ENCODE measurements at regions of chr13 and their contacts with region 1.

Region 1: GRCh38 chr13:110306960-110307746 is at the starts of genes COL4A1 and COL4A2:
- DNase-seq: peak; percentile 87
- H3K4me3 ChIP-seq: peak within 1 kb of the TSS; percentile 83
- H3K27ac ChIP-seq: peak within 1 kb of the TSS; percentile 97
- H3K4me1 ChIP-seq: peaks cover 98% of the 10 kb centered on the region
- H3K27me3 ChIP-seq: no peaks in the 10 kb centered on the region
- CTCF ChIP-seq: no peak
- total RNA-seq, gene COL4A1: 120 TPM
- total RNA-seq, gene COL4A2: 117 TPM

Region 2: DNA sequence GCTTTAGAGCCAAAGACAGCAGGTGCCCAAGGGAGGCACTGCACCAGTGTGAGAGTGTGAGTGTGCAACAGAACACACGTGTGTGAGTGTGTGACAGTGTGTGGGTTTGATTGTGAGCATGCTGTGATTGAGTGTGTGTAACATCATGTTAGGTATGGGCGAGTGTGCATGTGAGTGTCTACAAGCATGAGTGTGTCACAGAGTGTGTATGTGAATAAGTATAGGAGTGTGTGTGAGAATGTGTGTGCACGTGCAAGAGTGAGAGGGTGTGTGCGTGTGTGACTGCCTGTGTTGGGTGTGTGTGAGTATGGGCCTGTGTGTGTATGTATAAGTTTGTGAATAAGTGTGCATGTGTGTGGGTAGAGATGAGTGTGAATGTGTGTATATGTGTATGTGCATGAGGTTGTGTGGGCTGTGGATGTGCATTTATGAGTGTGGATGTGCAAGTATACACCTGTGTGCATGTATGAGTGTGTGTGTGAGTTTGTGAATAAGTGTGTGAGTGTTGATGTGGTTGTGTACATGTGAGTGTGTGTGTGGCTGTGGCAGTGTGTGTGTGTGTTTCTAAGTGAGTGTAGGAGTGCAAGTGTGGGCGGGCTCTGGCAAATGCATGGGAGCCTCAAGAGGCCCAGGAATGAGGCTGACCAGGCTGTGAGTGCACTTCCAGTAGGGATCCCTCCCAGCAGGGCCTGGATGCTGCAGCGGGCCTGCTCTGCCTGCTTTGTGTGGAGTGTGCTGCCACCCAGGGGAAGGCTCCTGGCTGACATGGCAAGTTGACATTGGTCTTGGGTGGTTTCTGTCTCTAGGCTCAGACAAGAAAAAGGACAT is 198.6 kb before region 1 on chr13:
- intact Hi-C with region 1: no loop called
- DNase-seq: peak; percentile 80
- H3K4me3 ChIP-seq: no peak overlapping the region
- H3K27ac ChIP-seq: peak overlapping the region; percentile 82
- H3K4me1 ChIP-seq: peaks cover 51% of the 10 kb centered on the region
- H3K27me3 ChIP-seq: no peaks in the 10 kb centered on the region
- CTCF ChIP-seq: peak; percentile 80

Region 3: DNA sequence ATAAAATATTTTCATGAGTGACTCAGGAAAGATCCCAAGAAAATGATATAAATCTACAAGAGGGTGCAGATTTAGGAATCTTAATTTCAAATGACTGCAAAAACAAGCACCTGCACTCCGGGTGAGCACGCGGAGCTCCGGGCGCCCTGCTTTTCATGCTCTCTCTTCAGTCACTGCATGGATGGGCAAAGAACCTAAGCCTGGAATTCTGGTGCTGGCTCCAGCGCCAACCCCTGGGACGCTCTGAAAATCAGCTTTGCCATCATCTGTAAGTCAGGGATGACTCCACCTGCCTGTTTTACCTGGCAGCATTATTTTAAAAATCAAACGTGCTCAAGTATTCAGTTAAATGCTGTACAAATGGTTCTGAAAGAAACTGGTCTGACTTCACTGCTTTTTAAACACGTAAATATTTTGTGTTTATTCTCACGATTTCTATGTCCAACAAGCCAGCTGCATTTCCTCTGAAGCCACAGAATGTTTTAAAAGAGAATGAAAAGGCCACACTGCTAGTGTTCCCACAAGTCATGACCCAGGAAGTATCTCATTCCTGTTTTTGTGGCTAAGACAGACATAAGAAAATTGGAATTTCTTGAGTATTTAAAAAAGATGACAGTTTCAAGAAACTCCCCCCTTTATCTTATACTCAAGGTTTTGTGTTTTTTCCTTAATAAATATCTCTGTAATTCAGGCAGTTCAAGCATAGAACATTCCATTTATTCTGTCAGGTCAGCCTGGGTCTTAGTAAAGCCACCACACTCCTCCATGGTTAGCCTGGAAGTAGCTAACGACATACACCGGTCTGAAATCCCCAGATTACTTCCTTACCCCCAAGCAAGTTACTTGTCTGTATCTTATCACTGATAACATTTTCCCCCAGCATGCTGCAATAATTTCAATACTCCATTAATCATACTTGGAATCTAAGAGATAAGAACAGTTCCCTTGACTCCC is 81.3 kb before region 1 on chr13:
- intact Hi-C with region 1: loop called (anchors 10 kb)
- DNase-seq: no peak
- H3K4me3 ChIP-seq: no peak overlapping the region
- H3K27ac ChIP-seq: peak overlapping the region; percentile 44
- H3K4me1 ChIP-seq: peaks cover 96% of the 10 kb centered on the region
- H3K27me3 ChIP-seq: no peaks in the 10 kb centered on the region
- CTCF ChIP-seq: no peak

Region 4: DNA sequence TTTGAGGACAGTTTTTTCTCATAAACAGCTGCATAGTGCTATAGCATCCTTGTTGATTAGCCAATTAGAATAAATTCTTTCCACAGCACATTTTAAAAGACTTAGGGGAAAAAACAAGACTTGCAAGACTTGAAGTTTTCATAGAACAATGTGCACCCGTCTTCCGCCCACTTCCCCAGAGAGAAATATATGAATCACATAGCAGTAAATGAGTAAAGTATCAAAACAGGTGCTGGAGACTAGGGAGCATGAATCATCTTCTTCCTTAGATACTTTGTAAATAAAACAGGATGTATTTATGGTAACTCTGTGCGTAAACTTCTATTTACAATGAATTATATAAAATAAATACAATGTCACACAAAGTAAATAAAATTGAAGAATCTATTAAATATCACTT is 75.1 kb after region 1 on chr13:
- intact Hi-C with region 1: no loop called
- DNase-seq: no peak
- H3K4me3 ChIP-seq: no peak overlapping the region
- H3K27ac ChIP-seq: peak overlapping the region; percentile 23
- H3K4me1 ChIP-seq: peaks cover 66% of the 10 kb centered on the region
- H3K27me3 ChIP-seq: no peaks in the 10 kb centered on the region
- CTCF ChIP-seq: no peak

Region 5: GRCh38 chr13:110412132-110412914 is 105.2 kb after region 1 on chr13:
- intact Hi-C with region 1: loop called (anchors 10 kb)
- DNase-seq: peak; percentile 85
- H3K4me3 ChIP-seq: no peak overlapping the region
- H3K27ac ChIP-seq: peak overlapping the region; percentile 88
- H3K4me1 ChIP-seq: peaks cover 97% of the 10 kb centered on the region
- H3K27me3 ChIP-seq: no peaks in the 10 kb centered on the region
- CTCF ChIP-seq: peak; percentile 95